Activated CD8-positive, alpha-beta T cell treated with anti-CD3 and anti-CD28 coated beads for 36 hours (primary cell): ENCODE measurements at regions of chr7 and their contacts with region 1.

Region 1: DNA sequence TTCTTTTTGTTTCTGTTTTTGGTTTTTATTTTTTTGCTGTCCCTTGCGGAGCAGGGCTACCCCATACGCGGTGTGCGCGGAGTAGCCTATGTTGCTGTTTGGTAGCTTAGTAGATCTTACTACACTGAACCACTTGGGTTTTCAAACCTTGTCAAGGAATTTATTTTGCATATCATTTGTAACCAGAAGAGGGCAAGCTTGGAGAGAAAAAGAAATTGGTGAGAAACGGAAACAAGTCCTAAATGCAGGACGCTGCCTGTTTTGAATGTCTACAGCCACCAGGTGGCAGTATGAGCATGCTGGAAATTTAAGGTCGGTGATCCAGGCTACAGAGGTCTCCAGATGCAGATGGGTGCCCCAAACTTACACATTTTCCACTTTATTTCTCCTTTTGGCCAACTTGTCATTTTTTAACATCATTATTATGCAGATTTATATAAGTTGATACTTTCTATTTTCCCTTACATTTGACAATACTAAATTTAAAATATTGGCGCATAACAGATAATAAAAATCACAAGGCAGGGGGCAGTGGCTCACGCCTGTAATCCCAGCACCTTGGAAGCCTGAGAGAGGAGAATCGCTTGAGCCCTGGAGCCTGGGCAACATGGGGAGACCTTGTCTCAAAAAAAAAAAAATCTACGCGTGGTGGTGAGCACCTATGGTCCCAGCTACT is 15.3 kb upstream of the TRA2A start:
- DNase-seq: peak; percentile 87
- ATAC-seq: peak; percentile 93
- H3K4me3 Mint-ChIP-seq: no peak overlapping the region
- H3K27ac Mint-ChIP-seq: no peak overlapping the region
- H3K4me1 Mint-ChIP-seq: peaks cover 8% of the 10 kb centered on the region
- H3K27me3 Mint-ChIP-seq: no peaks in the 10 kb centered on the region
- CTCF ChIP-seq: peak; percentile 93

Region 2: GRCh38 chr7:23234569-23235296 is 312.3 kb before region 1 on chr7:
- CTCF ChIA-PET with region 1: no interaction called
- POLR2A ChIA-PET with region 1: no interaction called
- intact Hi-C with region 1: no loop called
- DNase-seq: no peak
- ATAC-seq: no peak
- H3K4me3 Mint-ChIP-seq: no peak overlapping the region
- H3K27ac Mint-ChIP-seq: no peak overlapping the region
- H3K4me1 Mint-ChIP-seq: no peaks in the 10 kb centered on the region
- H3K27me3 Mint-ChIP-seq: no peaks in the 10 kb centered on the region
- CTCF ChIP-seq: no peak

Region 3: GRCh38 chr7:23357190-23358093 is 189.6 kb before region 1 on chr7:
- CTCF ChIA-PET with region 1: interaction called, 21 read pairs
- POLR2A ChIA-PET with region 1: no interaction called
- intact Hi-C with region 1: no loop called
- DNase-seq: no peak
- ATAC-seq: peak; percentile 52
- H3K4me3 Mint-ChIP-seq: no peak overlapping the region
- H3K27ac Mint-ChIP-seq: no peak overlapping the region
- H3K4me1 Mint-ChIP-seq: peaks cover 18% of the 10 kb centered on the region
- H3K27me3 Mint-ChIP-seq: peaks cover 12% of the 10 kb centered on the region
- CTCF ChIP-seq: peak; percentile 75

Region 4: DNA sequence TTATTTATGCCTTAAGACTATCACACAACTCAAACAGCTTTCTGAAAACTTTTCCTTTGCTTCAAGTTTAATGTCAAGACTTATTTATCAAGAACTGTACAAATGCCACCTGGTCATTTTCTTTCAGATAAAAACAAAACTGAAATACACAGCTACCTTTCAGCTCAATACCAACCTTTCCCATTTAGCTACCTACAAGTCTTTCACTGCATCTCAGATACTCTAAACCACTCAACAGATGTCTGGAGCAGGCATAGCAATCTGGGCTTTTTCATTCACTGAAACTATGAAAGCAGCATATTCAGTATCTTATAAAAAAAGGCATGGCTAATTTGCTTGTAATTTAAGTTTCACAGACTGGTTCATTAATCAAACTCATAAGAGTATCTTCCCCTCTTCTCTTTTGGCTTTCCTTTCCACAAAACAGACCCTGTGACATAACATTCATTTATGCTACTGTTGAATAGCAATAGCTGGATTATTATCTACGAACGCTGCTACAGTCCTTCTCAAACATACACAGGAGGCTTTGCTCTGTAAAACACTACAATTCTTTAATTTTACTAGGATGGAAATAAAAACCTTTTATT is 23.5 kb before region 1 on chr7:
- CTCF ChIA-PET with region 1: interaction called, 15 read pairs
- POLR2A ChIA-PET with region 1: no interaction called
- intact Hi-C with region 1: no loop called
- DNase-seq: no peak
- ATAC-seq: no peak
- H3K4me3 Mint-ChIP-seq: no peak overlapping the region
- H3K27ac Mint-ChIP-seq: peak overlapping the region; percentile 46
- H3K4me1 Mint-ChIP-seq: peaks cover 61% of the 10 kb centered on the region
- H3K27me3 Mint-ChIP-seq: no peaks in the 10 kb centered on the region
- CTCF ChIP-seq: no peak

Region 5: GRCh38 chr7:23685731-23686130 is 138.7 kb after region 1 on chr7:
- CTCF ChIA-PET with region 1: interaction called, 13 read pairs
- POLR2A ChIA-PET with region 1: no interaction called
- intact Hi-C with region 1: no loop called
- DNase-seq: no peak
- ATAC-seq: no peak
- H3K4me3 Mint-ChIP-seq: no peak overlapping the region
- H3K27ac Mint-ChIP-seq: no peak overlapping the region
- H3K4me1 Mint-ChIP-seq: peaks cover 5% of the 10 kb centered on the region
- H3K27me3 Mint-ChIP-seq: no peaks in the 10 kb centered on the region
- CTCF ChIP-seq: no peak

Region 6: DNA sequence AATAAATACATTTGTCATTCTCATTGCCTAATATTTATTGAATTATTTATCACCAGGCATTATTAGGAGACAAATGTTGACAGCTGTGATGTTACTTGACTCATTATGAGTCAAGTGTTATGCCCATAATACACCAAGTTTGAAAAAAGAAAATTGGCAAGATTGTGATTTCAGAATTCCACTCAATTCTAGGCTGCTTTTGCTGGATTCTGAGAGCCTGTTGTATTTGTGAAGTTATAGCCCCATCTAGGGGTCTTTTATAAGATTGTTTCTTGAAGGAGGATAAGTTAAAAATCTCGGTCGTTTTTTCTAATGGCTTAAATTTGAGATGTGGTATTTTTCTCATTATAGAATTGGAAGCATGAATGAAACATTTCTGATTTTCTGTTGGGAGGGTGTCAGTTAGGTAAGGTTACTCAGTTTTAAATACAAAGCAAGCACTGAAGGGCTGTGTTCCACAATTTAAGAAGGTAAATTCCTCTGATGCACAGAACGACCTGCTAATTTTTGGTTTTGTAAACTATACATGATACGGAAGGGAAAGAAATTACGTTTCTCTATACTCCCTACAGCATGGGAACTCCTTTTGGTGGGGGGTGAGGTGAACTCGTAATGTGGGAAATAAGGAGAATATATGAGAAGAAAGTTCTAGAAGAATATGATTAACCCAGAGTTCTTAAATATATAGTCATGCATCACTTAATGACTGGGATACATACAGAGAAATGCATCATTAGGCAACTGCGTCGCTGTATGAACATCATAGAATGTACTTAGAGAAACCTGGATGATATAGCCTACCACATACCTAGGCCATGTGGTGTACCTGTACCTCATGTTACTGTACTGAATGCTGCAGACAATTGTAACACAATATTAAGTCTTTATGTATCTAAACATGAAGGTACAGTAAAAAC is 165.6 kb after region 1 on chr7:
- CTCF ChIA-PET with region 1: interaction called, 55 read pairs
- POLR2A ChIA-PET with region 1: no interaction called
- intact Hi-C with region 1: loop called (anchors 1 kb)
- DNase-seq: no peak
- ATAC-seq: no peak
- H3K4me3 Mint-ChIP-seq: no peak overlapping the region
- H3K27ac Mint-ChIP-seq: no peak overlapping the region
- H3K4me1 Mint-ChIP-seq: no peaks in the 10 kb centered on the region
- H3K27me3 Mint-ChIP-seq: no peaks in the 10 kb centered on the region
- CTCF ChIP-seq: peak; percentile 84